HCT116 (cell line): ENCODE measurements at regions of chr22 and their contacts with region 1.

Region 1: DNA sequence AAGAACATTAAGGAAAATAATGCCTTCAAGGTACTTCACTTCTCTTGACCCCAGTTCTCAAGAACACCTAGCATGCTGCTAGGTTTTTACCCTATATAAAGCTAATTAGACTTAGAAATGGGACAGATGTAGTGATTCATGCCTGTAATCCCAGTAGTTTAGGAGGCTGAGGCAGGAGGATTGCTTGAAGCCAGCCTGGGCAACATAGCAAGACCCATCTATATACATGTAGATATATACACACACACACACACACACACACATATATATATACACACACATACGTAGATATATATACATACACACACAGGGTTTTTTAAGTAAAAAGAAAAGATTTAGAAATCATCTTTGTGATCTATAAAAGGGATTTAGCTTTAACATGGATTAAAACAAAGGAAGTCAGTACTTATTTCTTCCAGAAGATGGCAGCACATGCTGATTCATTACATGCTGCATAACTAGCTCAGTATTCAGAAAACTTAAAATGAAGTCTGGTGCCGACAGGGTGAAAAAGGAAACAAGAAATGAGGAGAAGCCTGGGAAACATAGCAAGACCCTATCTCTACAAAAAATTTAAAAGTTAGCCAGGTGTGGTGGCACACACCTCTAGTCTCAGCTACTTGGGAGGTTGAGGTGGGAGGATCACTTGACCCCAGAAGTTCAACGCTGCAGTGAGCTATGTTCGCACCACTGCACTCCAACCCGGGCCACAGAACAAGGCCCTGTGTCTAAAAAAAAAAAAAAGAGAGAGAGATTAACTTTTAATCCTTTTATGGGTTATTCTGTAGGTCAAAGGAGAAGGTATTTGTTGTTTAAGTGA is 28.5 kb upstream of the RBX1 start:
- DNase-seq: peak; percentile 29
- ATAC-seq: peak; percentile 66
- H3K4me3 ChIP-seq: no peak overlapping the region
- H3K27ac ChIP-seq: no peak overlapping the region
- H3K4me1 ChIP-seq: no peaks in the 10 kb centered on the region
- H3K27me3 ChIP-seq: no peaks in the 10 kb centered on the region
- CTCF ChIP-seq: peak; percentile 48 to 77 (median 49); a peak in 5 of 6 replicates
- POLR2A ChIP-seq: no peak
- RAD21 ChIP-seq: peak; percentile 80

Region 2: DNA sequence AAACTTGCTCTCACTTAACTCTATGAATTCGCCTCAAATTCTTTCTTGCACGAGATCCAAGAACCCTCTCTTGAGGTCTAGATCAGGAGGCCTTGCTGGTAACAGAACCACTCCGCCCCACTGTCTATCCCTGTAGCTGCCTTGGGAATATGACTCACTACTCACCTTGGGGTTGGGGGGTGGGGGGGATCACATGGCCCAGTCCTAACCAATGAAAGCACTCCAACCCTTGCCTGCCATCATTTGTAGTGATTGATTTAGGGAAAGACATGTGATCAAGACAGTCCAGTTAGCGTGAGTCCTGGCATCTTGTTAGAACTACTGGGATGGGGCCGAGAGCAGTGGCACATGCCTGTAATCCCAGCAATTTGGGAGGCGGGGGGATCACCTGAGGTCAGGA is 281.4 kb before region 1 on chr22:
- CTCF ChIA-PET with region 1: no interaction called
- POLR2A ChIA-PET with region 1: no interaction called
- RAD21 ChIA-PET with region 1: no interaction called
- intact Hi-C with region 1: no loop called
- DNase-seq: peak; percentile 56
- ATAC-seq: peak; percentile 9
- H3K4me3 ChIP-seq: no peak overlapping the region
- H3K27ac ChIP-seq: no peak overlapping the region
- H3K4me1 ChIP-seq: peaks cover 7 to 25% of the 10 kb centered on the region in 2 experiments; a peak in 3 of 4 replicates
- H3K27me3 ChIP-seq: no peaks in the 10 kb centered on the region
- CTCF ChIP-seq: no peak
- POLR2A ChIP-seq: no peak
- RAD21 ChIP-seq: no peak

Region 3: GRCh38 chr22:40911772-40912171 is 10.9 kb before region 1 on chr22:
- CTCF ChIA-PET with region 1: interaction called, 13 read pairs
- POLR2A ChIA-PET with region 1: interaction called, 3 read pairs
- RAD21 ChIA-PET with region 1: no interaction called
- intact Hi-C with region 1: no loop called
- DNase-seq: no peak
- ATAC-seq: no peak
- H3K4me3 ChIP-seq: no peak overlapping the region
- H3K27ac ChIP-seq: no peak overlapping the region
- H3K4me1 ChIP-seq: no peaks in the 10 kb centered on the region
- H3K27me3 ChIP-seq: no peaks in the 10 kb centered on the region
- CTCF ChIP-seq: no peak
- POLR2A ChIP-seq: no peak
- RAD21 ChIP-seq: no peak

Region 4: GRCh38 chr22:41237707-41238569 is 315.2 kb after region 1 on chr22:
- CTCF ChIA-PET with region 1: no interaction called
- POLR2A ChIA-PET with region 1: no interaction called
- RAD21 ChIA-PET with region 1: interaction called, 5 to 13 read pairs
- intact Hi-C with region 1: loop called (anchors 2 kb)
- DNase-seq: no peak
- ATAC-seq: peak; percentile 71
- H3K4me3 ChIP-seq: no peak overlapping the region
- H3K27ac ChIP-seq: no peak overlapping the region
- H3K4me1 ChIP-seq: peaks cover 11 to 12% of the 10 kb centered on the region in 2 experiments; a peak in 3 of 4 replicates
- H3K27me3 ChIP-seq: no peaks in the 10 kb centered on the region
- CTCF ChIP-seq: peak; percentile 18 to 42 (median 28); a peak in 4 of 6 replicates
- POLR2A ChIP-seq: no peak
- RAD21 ChIP-seq: no peak; the same call in 1 of the 2 replicates

Region 5: DNA sequence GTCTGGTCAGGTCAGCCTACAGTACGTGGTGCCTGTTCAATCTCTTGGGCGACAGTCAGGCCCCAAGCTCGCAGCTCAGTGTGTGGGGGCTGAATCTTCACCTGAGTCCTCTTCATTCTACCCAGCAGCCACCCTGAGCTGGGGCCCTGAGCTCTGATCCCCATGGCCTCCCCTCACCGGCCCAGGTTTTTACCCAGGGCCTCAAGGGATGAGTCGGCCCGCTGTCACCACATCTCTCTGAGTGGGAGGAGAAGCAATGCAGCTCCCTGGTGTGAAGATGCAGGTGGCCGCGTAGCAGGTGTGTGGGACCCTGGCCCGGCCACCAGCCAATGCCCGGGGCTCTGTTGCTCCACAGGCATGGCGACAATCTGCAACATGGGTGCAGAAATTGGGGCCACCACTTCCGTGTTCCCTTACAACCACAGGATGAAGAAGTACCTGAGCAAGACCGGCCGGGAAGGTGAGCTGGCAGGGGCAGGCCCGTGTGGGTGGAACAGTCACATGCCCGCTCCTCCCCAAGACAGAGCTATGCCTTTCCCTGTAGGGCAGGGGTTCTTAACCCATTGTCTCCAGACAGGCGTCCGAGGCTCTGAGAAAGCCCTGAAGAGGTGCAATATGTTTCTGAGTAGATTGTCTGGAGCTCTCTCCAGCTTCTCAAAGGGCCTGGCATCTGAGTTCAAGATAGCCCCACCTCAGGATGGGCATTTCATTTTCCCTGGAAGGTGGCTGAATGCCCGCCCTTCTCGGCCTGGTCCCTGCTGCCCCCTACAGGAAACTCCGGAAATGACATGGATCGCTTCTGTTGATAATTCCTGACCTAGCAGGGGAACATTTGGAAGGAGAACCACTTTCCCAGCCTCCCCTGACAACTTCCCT is 594.7 kb after region 1 on chr22:
- CTCF ChIA-PET with region 1: interaction called, 17 read pairs
- POLR2A ChIA-PET with region 1: no interaction called
- RAD21 ChIA-PET with region 1: no interaction called
- intact Hi-C with region 1: no loop called
- DNase-seq: no peak
- ATAC-seq: peak; percentile 53
- H3K4me3 ChIP-seq: peak overlapping the region in 1 of 2 experiments; percentile 8; a peak in 1 of 4 replicates
- H3K27ac ChIP-seq: peak overlapping the region; percentile 53
- H3K4me1 ChIP-seq: peaks cover 19 to 32% of the 10 kb centered on the region in 2 experiments
- H3K27me3 ChIP-seq: no peaks in the 10 kb centered on the region
- CTCF ChIP-seq: peak; percentile 74 to 96 (median 85); a peak in 5 of 6 replicates
- POLR2A ChIP-seq: no peak
- RAD21 ChIP-seq: peak; percentile 96